Tibial artery (tissue), 4 donors: ENCODE measurements at regions of chr18 and their contacts with region 1.

Region 1: DNA sequence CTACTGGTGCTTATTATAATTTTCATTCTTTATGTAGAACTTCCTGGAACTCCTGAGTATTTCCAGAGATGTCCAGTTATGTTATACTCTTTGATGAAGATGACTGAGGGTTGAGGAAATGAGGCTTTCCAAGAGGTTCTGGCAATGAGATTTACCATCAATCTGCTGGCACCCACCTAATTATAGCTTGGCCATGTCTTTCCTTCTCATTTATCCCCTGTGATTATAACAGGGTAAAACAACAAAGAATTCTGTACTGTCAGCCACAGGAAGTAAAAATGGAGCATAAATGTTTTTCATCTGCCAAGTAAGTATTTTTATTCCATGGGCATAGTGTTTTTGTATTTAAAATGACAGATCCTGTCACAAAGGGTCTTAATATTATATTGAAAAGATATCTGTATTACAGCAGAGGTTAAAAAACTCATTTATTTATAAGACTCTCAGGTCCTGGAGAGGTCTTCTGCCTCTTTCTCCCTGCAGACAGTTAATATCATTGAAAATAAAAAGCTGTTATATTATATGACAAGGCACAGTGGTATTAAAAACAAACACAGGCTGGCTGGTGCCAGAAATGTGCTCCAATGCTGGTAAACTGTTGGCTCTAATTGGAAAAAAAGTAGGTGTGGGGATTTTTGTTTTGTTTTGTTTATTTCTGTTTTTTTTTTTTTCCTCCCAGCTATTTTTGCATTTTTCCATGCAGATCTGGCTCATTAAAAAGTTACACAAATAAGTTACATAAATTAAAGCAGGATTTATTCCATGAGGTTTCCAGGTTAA is 1764.1 kb upstream of the CELF4 start:
- DNase-seq: no peak
- H3K4me3 ChIP-seq: no peak overlapping the region
- H3K27ac ChIP-seq: no peak overlapping the region
- H3K4me1 ChIP-seq: no peaks in the 10 kb centered on the region
- H3K27me3 ChIP-seq: no peaks in the 10 kb centered on the region
- CTCF ChIP-seq: no peak

Region 2: DNA sequence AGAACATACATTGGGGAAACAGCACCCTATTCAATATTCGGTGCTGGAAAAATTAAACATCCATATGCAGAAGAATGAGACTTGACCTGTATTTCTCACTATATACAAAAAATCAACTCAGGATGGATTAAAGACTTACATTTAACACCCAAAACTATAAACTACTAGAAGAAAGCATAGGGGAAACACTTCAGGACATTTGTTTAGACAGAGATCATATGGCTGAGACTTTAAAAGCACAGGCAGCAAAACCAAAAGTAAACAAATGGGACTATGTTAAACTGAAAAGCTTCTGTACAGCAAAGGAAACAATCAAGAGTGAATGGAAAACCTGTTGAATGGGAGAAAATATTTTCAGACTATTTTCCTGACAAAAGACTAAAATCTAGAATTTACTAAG is 70.0 kb before region 1 on chr18:
- intact Hi-C with region 1: loop called (anchors 10 kb)
- DNase-seq: no peak
- H3K4me3 ChIP-seq: no peak overlapping the region
- H3K27ac ChIP-seq: no peak overlapping the region
- H3K4me1 ChIP-seq: no peaks in the 10 kb centered on the region
- H3K27me3 ChIP-seq: no peaks in the 10 kb centered on the region
- CTCF ChIP-seq: no peak